Ascending aorta (tissue), 2 donors: ENCODE measurements at regions of chr21 and their contacts with region 1.

Region 1: DNA sequence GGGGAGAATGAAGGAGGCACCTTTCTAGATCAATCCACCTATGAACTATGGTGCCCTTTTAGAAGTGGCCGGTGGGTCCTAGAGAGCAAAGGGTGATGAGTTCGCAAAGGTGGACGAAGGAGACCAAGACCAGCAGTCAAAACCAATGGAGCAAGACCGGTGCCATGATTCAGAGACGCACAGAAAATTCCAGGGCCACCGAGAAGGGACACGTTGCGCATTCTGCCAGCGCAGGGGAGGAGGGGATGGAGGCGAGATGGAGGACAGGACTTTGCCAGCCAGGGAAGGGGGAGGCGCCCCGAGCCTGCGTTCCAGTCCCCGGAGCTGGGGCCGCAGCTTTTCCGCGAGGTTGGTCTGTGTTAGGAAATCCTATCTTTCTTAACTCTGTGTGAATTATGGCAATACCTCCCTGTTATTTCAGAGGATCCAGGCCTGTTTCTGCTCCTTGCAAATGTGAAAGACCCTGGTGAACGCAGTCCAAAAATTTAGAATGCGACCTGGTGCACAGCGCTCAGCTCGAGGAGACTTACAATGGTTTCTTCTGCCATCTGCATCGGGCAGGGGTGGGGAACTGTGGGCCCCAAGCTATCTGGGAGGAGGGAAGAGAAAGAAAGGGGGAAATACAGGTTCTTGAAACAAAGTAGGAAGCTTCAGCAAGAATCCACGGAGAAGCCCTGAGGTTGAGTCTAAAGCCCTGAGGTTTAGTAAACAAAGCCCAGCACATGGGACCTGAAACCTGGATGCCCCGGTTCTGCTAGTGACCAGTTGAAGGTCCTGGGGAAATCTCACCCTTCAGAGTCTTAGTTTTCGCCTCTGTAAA is 129.4 kb downstream of the MRPS6 start:
- DNase-seq: peak in 1 of 2 donors; percentile 73
- H3K4me3 ChIP-seq: peak overlapping the region; percentile 59 to 68
- H3K27ac ChIP-seq: peak overlapping the region; percentile 84 to 85
- H3K4me1 ChIP-seq: peaks cover 0 to 45% of the 10 kb centered on the region in 2 donors
- H3K27me3 ChIP-seq: no peaks in the 10 kb centered on the region
- CTCF ChIP-seq: no peak

Region 2: DNA sequence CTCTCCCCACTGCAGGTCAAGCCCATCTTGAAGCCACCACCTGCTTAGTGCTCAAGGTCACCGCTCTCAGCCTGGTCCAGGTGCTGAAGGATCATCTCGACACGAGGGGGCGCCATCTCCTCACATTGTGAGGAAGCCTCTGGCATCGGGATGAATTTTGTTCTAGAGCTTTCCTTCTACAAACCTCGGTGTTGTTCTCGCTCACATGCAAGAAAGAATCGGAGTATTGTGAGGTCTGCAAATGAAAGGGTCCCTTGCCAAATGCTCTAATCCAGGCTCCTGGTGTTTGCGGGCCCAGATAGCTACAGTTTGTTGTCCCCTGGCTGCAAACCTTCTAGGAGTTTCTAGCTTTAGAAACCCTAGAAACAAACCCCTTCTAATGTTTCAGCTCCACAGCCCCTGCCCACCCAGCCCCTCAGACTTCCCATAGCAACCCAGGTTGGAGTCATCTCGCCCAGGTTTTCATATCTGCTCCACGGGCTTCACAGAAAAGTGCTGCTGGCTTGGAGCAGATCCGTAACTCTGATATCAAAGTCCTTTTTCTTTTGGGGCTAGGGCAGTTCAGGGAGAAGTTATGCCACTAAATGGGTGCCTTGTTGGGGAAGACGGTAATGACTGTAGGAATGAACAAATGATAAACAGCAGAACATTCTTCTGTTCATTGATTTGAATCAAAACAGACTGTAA is 278.5 kb before region 1 on chr21:
- intact Hi-C with region 1: loop called (anchors 5 kb)
- DNase-seq: peak in 1 of 2 donors; percentile 91
- H3K4me3 ChIP-seq: peak overlapping the region in 1 of 2 donors; percentile 37
- H3K27ac ChIP-seq: peak overlapping the region; percentile 51 to 62
- H3K4me1 ChIP-seq: peaks cover 0 to 7% of the 10 kb centered on the region in 2 donors
- H3K27me3 ChIP-seq: no peaks in the 10 kb centered on the region
- CTCF ChIP-seq: peak; percentile 87 to 93 (median 90)

Region 3: GRCh38 chr21:34073032-34073869 is 129.5 kb before region 1 on chr21 and contains the starts of genes MRPS6 and SLC5A3:
- intact Hi-C with region 1: loop called (anchors 1 kb)
- DNase-seq: peak in 1 of 2 donors; percentile 90
- H3K4me3 ChIP-seq: peak within 1 kb of the TSS; percentile 75 to 93
- H3K27ac ChIP-seq: peak within 1 kb of the TSS; percentile 74 to 92
- H3K4me1 ChIP-seq: peaks cover 7 to 16% of the 10 kb centered on the region in 2 donors
- H3K27me3 ChIP-seq: no peaks in the 10 kb centered on the region
- CTCF ChIP-seq: no peak
- total RNA-seq, gene MRPS6: 17.8 TPM
- total RNA-seq, gene SLC5A3: 8.4 TPM

Region 4: GRCh38 chr21:34187935-34188334 is 14.8 kb before region 1 on chr21:
- intact Hi-C with region 1: loop called (anchors 2 kb)
- DNase-seq: peak in 1 of 2 donors; percentile 58
- H3K4me3 ChIP-seq: no peak overlapping the region
- H3K27ac ChIP-seq: peak overlapping the region in 1 of 2 donors; percentile 44
- H3K4me1 ChIP-seq: peaks cover 3 to 18% of the 10 kb centered on the region in 2 donors
- H3K27me3 ChIP-seq: no peaks in the 10 kb centered on the region
- CTCF ChIP-seq: no peak

Region 5: DNA sequence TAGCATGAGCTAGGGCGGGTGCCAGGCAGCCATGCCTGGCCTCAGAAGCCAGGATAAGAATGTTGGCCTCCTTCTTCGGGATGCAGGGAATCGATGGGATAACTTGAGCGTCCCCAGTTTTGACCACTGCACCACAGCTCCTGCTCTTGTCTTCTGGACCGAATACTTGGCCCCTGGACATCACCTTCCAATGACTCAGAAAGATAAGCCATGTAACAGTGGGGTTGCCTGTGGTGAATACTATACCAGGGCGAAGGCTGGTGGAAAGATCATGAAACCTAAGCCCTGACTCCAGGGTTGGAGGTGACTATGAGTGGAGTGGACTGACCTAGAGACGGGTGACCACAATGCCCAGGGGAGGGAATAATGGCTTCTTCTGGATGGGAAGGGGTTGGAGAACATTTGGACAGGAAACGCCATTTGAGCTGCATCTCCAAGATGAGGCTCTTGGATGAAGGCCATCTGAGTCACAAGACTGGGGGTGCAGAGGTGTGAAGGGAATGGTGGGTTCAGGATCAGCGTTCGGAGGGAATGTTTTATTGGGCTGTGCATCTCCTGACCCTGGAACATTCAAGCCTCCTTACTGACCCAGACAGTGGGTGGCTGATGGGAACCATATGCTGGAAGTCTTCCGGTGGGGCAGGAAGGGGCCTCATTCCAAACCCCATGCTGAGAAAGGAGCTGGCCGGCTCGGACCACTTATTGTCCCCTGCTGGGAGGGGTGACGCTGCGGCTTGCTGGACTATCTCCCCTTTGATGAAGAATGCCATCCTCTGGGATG is 142.5 kb after region 1 on chr21:
- intact Hi-C with region 1: loop called (anchors 5 kb)
- DNase-seq: no peak
- H3K4me3 ChIP-seq: no peak overlapping the region
- H3K27ac ChIP-seq: peak overlapping the region; percentile 66 to 70
- H3K4me1 ChIP-seq: peaks cover 3 to 21% of the 10 kb centered on the region in 2 donors
- H3K27me3 ChIP-seq: no peaks in the 10 kb centered on the region
- CTCF ChIP-seq: no peak